ENCODE measurements at regions of chr5 and their contacts with region 1.

Region 1: DNA sequence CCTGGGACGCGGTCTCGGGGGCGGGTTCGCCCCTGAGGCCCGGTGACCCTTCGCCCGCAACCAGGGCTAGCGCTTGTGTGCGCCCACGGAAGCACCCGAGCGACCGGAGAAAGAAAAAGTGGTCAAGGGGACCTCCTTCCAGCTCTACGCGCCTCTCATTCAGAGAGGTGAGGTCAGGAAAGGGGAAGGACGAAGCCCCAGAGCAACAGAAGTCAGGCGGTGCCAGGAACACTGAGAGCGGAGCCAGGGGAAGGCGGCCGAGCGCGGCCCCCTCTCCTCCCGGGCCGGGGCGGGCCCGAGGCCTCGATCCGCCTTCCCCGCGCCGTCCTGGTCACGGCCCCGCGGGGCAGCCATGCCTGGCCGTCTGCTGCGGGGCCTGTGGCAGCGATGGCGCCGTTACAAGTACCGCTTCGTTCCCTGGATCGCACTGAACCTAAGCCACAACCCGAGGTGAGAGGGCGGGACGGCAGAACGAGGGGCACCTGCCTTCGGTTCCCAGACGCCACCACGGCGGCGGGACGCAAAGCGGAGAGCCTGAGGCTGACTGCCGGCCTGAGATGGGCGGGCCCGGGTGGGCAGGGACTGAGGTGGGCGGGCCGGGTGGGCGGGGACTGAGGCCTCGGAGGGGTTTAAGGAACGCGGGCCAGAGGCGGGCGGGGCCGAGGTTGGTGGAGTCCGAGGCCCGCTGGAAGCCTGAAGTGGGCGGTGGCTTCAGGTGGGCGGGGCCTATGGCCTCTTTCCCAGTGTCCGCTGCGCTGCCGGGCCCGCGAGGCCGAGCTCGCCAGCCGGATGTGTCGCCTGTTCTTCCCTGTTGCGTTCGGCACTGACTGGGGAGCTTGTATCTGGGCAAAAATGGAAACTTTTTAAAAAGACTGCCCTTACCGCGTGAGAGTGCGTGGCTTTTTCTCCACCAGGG is at the start of gene SETD9:
- DNase-seq: peak; percentile 65 to 95 (median 80)
- ATAC-seq: peak; percentile 84
- H3K4me3 ChIP-seq: peak within 1 kb of the TSS; percentile 88
- H3K4me3 Mint-ChIP-seq: peak within 1 kb of the TSS; percentile 95
- H3K27ac ChIP-seq: peak within 1 kb of the TSS; percentile 57 to 82
- H3K27ac Mint-ChIP-seq: peak within 1 kb of the TSS; percentile 81
- H3K4me1 ChIP-seq: peaks cover 15% of the 10 kb centered on the region
- H3K4me1 Mint-ChIP-seq: peaks cover 24% of the 10 kb centered on the region
- H3K27me3 ChIP-seq: no peaks in the 10 kb centered on the region
- H3K27me3 Mint-ChIP-seq: no peaks in the 10 kb centered on the region
- CTCF ChIP-seq: no peak
- total RNA-seq, gene SETD9: 1.6 to 2.3 TPM

Region 2: DNA sequence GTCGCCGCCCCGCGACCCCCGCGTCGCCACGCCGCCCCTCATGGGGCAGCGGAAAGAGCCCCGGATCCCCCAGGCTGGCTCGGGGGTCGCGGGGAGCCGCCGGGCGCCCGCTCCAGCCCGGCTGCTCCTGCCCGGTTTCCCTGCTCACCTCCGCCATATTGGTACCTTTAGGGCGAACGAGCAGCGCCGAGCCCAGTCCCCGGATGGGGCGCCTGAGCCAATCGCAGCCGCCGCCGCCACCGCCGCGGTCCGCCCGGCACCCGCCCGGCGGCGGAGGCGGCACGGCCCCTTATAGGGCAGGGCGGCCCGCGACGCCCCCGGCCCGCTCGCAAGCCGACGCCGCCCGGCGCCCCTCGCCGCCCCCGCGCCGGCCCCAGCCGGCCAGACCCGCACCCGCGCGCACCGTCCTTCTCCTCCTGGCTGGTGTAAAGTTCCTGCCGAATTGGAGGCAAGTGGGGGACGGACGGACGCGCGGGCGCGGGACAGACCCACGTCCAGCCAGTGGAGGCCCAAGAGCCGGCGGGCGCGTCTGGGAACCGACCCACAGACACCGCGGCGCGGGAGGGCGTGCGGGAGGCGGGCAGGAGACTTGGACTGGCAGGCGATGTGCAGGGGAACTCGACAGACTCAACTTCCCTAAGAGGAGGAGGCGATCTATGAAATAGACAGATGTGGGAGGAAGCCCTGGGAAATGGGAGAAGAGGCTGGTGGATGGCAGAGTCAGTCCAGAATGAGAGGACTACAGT is 42.6 kb after region 1 on chr5 and contains the start of gene MIER3:
- CTCF ChIA-PET with region 1: no interaction called
- POLR2A ChIA-PET with region 1: interaction called, 26 read pairs
- intact Hi-C with region 1: loop called (anchors 2 to 5 kb)
- DNase-seq: peak; percentile 61 to 89 (median 73)
- ATAC-seq: peak; percentile 92
- H3K4me3 ChIP-seq: peak within 1 kb of the TSS; percentile 78
- H3K4me3 Mint-ChIP-seq: peak within 1 kb of the TSS; percentile 89
- H3K27ac ChIP-seq: no peak within 1 kb of the TSS
- H3K27ac Mint-ChIP-seq: peak within 1 kb of the TSS; percentile 88
- H3K4me1 ChIP-seq: peaks cover 17% of the 10 kb centered on the region
- H3K4me1 Mint-ChIP-seq: peaks cover 20% of the 10 kb centered on the region
- H3K27me3 ChIP-seq: peaks cover 7 to 14% of the 10 kb centered on the region in 2 experiments
- H3K27me3 Mint-ChIP-seq: peaks cover 21% of the 10 kb centered on the region
- CTCF ChIP-seq: no peak
- total RNA-seq, gene MIER3: 25.9 to 26.1 TPM

Region 3: DNA sequence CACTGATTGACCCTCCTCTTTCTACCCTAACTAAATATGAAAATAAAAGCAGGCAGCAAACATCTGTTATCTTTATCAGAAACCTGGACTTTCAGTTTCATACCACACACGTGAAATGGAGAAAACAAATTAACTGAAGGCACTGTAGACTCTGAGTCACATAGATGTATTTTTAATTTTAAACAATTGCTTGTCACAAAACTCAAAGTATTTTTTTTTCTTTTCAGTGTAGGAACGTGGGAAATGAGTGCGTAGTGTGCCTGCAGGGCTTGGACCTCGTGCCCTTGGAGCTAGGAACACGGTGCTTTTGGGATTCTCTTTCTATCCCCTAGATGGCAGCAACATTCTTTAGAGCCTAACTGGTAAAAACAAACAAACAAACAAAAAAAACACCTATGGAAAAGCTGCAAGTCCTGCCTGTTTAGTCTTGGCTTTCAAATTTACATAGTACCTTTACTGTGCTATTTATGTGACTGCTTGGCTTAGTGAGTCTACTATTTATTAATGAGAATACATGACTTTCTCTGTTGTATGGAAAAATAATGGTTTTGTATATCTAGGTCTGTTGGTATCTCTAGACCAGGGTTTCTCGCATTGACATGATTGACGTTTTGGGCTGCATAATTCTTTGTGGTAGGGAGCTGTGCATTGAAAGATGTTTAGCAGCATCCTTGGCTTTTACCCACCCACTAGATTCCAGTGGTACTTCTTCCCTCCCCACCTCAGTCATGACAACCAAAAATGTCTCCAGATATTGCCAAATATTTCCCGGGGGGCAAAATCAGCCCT is 589.9 kb after region 1 on chr5:
- CTCF ChIA-PET with region 1: no interaction called
- POLR2A ChIA-PET with region 1: interaction called, 3 read pairs
- intact Hi-C with region 1: loop called in 1 of 2 experiments (anchors 10 kb)
- DNase-seq: peak in 4 of 14 experiments; percentile 21 to 49 (median 42)
- ATAC-seq: no peak
- H3K4me3 ChIP-seq: peak overlapping the region; percentile 15
- H3K4me3 Mint-ChIP-seq: peak overlapping the region; percentile 81
- H3K27ac ChIP-seq: no peak overlapping the region
- H3K27ac Mint-ChIP-seq: peak overlapping the region; percentile 54
- H3K4me1 ChIP-seq: peaks cover 13% of the 10 kb centered on the region
- H3K4me1 Mint-ChIP-seq: peaks cover 34% of the 10 kb centered on the region
- H3K27me3 ChIP-seq: no peaks in the 10 kb centered on the region
- H3K27me3 Mint-ChIP-seq: no peaks in the 10 kb centered on the region
- CTCF ChIP-seq: peak; percentile 71

Measured in CD4-positive, alpha-beta T cell (primary cell).